Pancreas (tissue), 10 donors: ENCODE measurements at regions of chr11 and their contacts with region 1.

Region 1: GRCh38 chr11:4084406-4085125 is 10.0 kb upstream of the RRM1 start:
- DNase-seq: no peak
- ATAC-seq: no peak
- H3K4me3 ChIP-seq: no peak overlapping the region
- H3K27ac ChIP-seq: no peak overlapping the region
- H3K4me1 ChIP-seq: no peaks in the 10 kb centered on the region
- H3K27me3 ChIP-seq: no peaks in the 10 kb centered on the region
- CTCF ChIP-seq: no peak

Region 2: GRCh38 chr11:3764266-3764665 is 320.3 kb before region 1 on chr11:
- intact Hi-C with region 1: no loop called
- DNase-seq: no peak
- ATAC-seq: no peak
- H3K4me3 ChIP-seq: no peak overlapping the region
- H3K27ac ChIP-seq: no peak overlapping the region
- H3K4me1 ChIP-seq: no peaks in the 10 kb centered on the region
- H3K27me3 ChIP-seq: no peaks in the 10 kb centered on the region
- CTCF ChIP-seq: no peak

Region 3: DNA sequence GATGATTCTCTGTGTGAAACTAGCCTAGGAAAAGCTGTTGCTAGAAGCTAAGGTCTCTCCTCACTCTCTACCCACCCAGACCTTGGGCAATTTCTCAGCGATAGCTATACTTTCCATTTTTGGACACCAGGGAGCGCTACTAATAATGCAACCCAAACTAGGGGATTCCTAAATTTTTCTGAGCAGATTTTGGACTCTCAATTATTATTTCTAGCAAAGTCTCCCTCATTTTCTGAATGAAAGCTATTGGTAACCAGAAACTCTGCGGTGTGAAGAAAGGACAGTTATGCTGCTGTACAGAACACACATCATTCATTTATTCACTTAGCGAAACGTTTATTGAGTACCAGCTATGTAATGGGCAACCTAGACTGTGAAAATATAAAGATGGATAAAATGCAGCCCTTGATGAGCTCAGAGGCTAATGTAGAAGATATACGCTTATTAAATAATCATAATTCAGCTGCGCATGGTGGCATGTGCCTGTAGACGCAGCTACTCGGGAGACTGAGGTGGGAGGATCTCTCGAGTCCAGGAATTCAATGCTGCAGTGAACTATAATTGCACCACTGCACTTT is 235.2 kb before region 1 on chr11:
- intact Hi-C with region 1: loop called in 1 of 3 experiments (anchors 5 kb)
- DNase-seq: peak in 1 of 6 donors; percentile 48
- ATAC-seq: peak; percentile 67 to 88 (median 85)
- H3K4me3 ChIP-seq: no peak overlapping the region
- H3K27ac ChIP-seq: no peak overlapping the region
- H3K4me1 ChIP-seq: no peaks in the 10 kb centered on the region
- H3K27me3 ChIP-seq: no peaks in the 10 kb centered on the region
- CTCF ChIP-seq: peak; percentile 16 to 49 (median 34)